K562 (cell line): ENCODE measurements at regions of chr1 and their contacts with region 1.

Region 1: DNA sequence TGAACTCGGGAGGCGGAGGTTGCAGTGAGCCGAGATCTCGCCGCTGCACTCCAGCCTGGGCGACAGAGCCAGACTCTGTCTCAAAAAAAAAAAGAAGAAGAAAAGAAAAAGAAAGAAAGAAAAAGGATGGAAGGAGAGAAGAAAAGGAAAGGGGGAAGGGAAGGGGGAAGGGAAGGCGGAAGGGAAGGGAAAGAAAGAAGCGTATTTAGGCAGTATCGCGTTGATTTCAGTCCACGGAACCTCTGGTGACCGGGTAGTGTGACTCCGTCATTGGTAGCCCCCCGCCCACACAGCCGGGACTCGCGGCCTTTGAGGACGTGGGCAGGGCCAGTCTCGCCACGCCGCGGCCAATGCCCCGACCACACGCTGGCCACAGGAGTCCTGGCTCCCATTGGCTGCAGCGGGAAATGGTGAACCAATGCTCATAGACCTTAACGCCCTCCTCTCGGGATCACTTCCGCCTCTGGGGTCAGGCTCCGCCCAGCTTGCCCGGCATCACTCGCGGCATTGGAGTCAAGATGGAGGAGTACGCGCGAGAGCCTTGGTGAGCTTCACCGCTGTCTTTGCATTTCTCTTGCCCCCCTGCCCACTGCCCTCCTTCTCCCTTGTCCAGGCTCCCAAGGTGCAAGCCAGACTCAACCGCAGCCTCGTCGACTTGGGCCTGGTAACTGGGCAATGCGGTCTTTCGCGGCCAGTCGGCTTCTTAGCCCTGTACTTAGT is at the start of gene TIMM17A:
- DNase-seq: peak; percentile 96 to 100 (median 97)
- ATAC-seq: peak; percentile 100
- H3K4me3 ChIP-seq: peak within 1 kb of the TSS; percentile 81
- H3K27ac ChIP-seq: peak within 1 kb of the TSS; percentile 98
- H3K4me1 ChIP-seq: peaks cover 12 to 13% of the 10 kb centered on the region in 2 experiments; a peak in 3 of 5 replicates
- H3K27me3 ChIP-seq: no peaks in the 10 kb centered on the region
- CTCF ChIP-seq: 0 out of 6 replicates have a peak, but pooled peaks of 1 of the 3 experiments have one; percentile 3
- EP300 ChIP-seq: peak; percentile 68
- POLR2A ChIP-seq: peak; percentile 99
- RAD21 ChIP-seq: peak in 1 of 2 experiments; percentile 7; a peak in 2 of 4 replicates
- polyA plus RNA-seq, gene TIMM17A: 676 to 744 TPM

Region 2: GRCh38 chr1:201916649-201917249 is 38.4 kb before region 1 on chr1:
- CTCF ChIA-PET with region 1: no interaction called
- POLR2A ChIA-PET with region 1: interaction called, 10 read pairs
- in situ Hi-C with region 1: no loop called
- intact Hi-C with region 1: loop called (anchors 2 kb)
- DNase-seq: peak; percentile 64 to 81 (median 70)
- ATAC-seq: peak; percentile 78
- H3K4me3 ChIP-seq: no peak overlapping the region
- H3K27ac ChIP-seq: no peak overlapping the region
- H3K4me1 ChIP-seq: peaks cover 15 to 18% of the 10 kb centered on the region in 2 experiments
- H3K27me3 ChIP-seq: no peaks in the 10 kb centered on the region
- CTCF ChIP-seq: peak in 1 of 3 experiments; percentile 30; a peak in 2 of 6 replicates
- EP300 ChIP-seq: peak; percentile 23; the same call in 1 of the 2 replicates
- POLR2A ChIP-seq: no peak
- RAD21 ChIP-seq: no peak

Region 3: GRCh38 chr1:201925981-201926645 is 29.1 kb before region 1 on chr1:
- CTCF ChIA-PET with region 1: no interaction called
- POLR2A ChIA-PET with region 1: interaction called, 12 read pairs
- in situ Hi-C with region 1: no loop called
- intact Hi-C with region 1: no loop called
- DNase-seq: no peak
- ATAC-seq: peak; percentile 20; the same call in 2 of the 3 replicates
- H3K4me3 ChIP-seq: no peak overlapping the region
- H3K27ac ChIP-seq: peak overlapping the region; percentile 34; the same call in 1 of the 3 replicates
- H3K4me1 ChIP-seq: peaks cover 20 to 39% of the 10 kb centered on the region in 2 experiments
- H3K27me3 ChIP-seq: no peaks in the 10 kb centered on the region
- CTCF ChIP-seq: no peak
- EP300 ChIP-seq: no peak
- POLR2A ChIP-seq: no peak
- RAD21 ChIP-seq: no peak

Region 4: GRCh38 chr1:201990427-201990826 is 35.3 kb after region 1 on chr1:
- CTCF ChIA-PET with region 1: no interaction called
- POLR2A ChIA-PET with region 1: no interaction called
- in situ Hi-C with region 1: no loop called
- intact Hi-C with region 1: no loop called
- DNase-seq: no peak
- ATAC-seq: no peak
- H3K4me3 ChIP-seq: no peak overlapping the region
- H3K27ac ChIP-seq: no peak overlapping the region
- H3K4me1 ChIP-seq: no peaks in the 10 kb centered on the region; a peak in 1 of 5 replicates
- H3K27me3 ChIP-seq: no peaks in the 10 kb centered on the region
- CTCF ChIP-seq: no peak
- EP300 ChIP-seq: no peak
- POLR2A ChIP-seq: no peak
- RAD21 ChIP-seq: no peak